PC-9 (cell line): ENCODE measurements at regions of chr10 and their contacts with region 1.

Region 1: DNA sequence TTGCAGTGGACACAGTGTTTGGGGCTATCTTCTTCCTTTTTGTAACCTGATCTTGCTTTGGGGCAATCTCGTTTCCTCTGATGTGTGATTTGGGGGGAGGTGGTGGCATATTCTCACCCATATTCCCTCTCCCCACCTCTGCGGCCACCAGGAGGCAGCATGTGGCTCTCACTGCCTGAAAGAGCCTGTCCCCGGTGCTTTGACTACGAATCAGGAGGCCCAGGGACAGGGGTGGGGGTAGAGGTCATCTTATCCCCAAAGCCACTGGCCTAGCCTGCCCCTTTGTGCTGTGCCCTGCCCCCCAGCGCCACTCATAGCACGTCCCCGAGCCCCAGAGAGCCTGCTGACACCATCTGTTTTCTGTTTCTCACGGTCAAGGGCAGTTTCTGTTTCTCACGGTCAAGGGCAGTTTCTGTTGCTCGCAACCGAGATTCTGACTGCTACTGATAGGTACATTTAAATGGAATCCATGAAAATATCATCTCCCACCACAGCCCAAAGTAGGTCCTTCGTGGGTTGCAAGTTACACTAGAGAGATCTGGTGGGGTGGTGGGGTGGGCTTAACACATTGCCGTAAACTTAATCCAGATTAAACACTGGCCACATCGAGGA is 28.2 kb downstream of the PHYH start:
- DNase-seq: peak in 1 of 2 experiments; percentile 8
- H3K4me3 ChIP-seq: no peak overlapping the region
- H3K27ac ChIP-seq: no peak overlapping the region
- H3K4me1 ChIP-seq: no peaks in the 10 kb centered on the region
- H3K27me3 ChIP-seq: no peaks in the 10 kb centered on the region
- CTCF ChIP-seq: peak; percentile 50

Region 2: DNA sequence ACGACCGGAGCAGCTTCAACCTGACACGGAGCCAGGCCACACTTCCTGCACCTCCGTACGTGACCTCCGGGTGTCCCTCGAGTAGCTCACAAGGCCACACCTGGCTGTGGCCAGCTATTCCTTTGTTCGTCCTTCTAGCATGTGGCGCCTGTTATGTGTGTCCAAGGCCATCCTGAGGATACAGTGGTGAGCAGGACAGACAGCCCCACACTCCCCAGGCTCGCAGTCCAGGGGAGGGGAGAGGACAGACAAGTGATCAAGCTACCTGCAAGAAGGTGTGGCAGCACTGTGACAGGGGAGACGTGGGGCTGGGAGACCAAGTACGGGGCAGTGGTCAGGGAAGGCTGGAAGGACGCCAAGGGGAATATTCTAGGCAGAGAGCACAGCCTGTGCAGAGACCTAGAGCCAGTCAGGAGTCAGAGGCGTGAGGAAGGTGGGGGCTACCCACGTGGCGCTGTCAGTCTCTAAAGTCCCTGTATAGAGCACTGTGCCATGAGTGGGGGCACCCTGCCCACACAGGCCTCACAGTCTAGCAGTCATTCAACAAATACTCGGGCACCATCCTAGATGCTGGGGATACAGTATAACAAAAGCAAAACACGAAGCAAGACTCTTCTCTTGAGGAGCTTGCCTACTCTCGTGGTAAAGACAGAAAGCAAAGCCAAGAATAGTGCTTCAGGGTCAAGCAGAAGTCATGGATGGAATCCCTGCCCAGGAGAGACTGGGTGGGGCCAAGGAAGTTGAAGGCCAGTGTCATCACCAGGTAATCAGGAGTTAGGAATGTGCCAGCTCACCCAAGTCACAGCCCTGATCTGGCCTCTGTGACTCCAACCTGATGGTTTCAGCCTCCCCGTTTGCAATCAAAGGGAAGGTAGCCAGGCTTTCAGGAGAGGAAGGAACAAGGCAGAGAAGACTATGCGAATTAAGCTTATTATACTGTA is 1389.9 kb before region 1 on chr10:
- CTCF ChIA-PET with region 1: no interaction called
- POLR2A ChIA-PET with region 1: no interaction called
- intact Hi-C with region 1: no loop called
- DNase-seq: peak; percentile 90 to 94
- H3K4me3 ChIP-seq: peak overlapping the region; percentile 36; the same call in 1 of the 2 replicates
- H3K27ac ChIP-seq: peak overlapping the region; percentile 100
- H3K4me1 ChIP-seq: peaks cover 79% of the 10 kb centered on the region
- H3K27me3 ChIP-seq: no peaks in the 10 kb centered on the region
- CTCF ChIP-seq: peak; percentile 44

Region 3: GRCh38 chr10:13099666-13100348 is 171.9 kb before region 1 on chr10 and contains the start of gene OPTN:
- CTCF ChIA-PET with region 1: no interaction called
- POLR2A ChIA-PET with region 1: no interaction called
- intact Hi-C with region 1: no loop called
- DNase-seq: peak; percentile 61 to 77
- H3K4me3 ChIP-seq: peak within 1 kb of the TSS; percentile 70
- H3K27ac ChIP-seq: peak within 1 kb of the TSS; percentile 38; the same call in 1 of the 2 replicates
- H3K4me1 ChIP-seq: 0 out of 2 replicates have a peak, but pooled peaks cover 3% of the 10 kb centered on the region
- H3K27me3 ChIP-seq: no peaks in the 10 kb centered on the region
- CTCF ChIP-seq: peak; percentile 71
- total RNA-seq, gene OPTN: 26.6 and 26.8 TPM in 2 replicates

Region 4: GRCh38 chr10:13247246-13247645 is 24.4 kb before region 1 on chr10:
- CTCF ChIA-PET with region 1: no interaction called
- POLR2A ChIA-PET with region 1: interaction called, 29 read pairs
- intact Hi-C with region 1: no loop called
- DNase-seq: no peak
- H3K4me3 ChIP-seq: no peak overlapping the region
- H3K27ac ChIP-seq: no peak overlapping the region
- H3K4me1 ChIP-seq: no peaks in the 10 kb centered on the region
- H3K27me3 ChIP-seq: no peaks in the 10 kb centered on the region
- CTCF ChIP-seq: no peak

Region 5: DNA sequence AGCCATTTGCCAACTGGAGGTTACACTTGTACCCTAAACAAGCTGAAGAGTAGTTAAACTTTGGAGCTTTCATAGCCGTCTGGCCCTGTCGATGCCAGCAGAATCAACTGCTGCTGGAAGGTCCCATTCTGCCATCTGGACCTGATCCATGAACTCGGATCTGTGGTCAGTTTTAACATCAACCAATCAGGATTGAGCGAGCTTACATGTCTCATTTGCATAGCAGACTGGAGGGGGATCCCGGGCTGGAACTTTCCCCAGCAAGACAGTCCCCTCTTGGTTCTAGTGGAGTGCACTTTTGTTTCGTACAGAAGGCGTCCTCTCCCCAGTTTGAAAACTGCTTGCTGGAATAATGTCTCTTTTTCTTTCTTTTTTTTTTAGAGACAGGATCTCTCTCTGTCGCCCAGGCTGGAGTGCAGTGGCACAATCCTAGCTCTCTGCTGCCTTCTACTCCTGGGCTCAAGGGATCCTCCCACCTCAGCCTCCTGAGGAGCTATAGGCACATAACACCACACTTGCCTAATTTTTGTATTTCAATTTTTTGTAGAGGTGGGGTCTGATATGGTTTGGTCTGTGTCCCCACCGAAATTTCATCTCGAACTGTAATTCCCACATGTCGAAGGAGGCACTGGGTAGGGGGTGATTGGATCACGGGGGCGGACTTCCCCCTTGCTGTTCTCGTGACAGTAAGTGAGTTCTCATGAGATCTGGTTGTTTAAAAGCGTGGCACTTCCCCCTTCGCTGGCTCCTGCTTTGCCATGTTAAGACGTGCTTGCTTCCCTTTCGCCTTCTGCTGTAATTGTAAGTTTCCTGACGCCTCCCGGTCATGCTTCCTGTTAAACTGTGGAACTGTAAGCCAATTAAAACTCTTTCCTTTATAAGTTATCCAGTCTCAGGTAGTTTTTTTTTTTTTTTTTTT is 119.2 kb after region 1 on chr10:
- CTCF ChIA-PET with region 1: no interaction called
- POLR2A ChIA-PET with region 1: no interaction called
- intact Hi-C with region 1: no loop called
- DNase-seq: no peak
- H3K4me3 ChIP-seq: no peak overlapping the region
- H3K27ac ChIP-seq: no peak overlapping the region
- H3K4me1 ChIP-seq: no peaks in the 10 kb centered on the region
- H3K27me3 ChIP-seq: peaks cover 40% of the 10 kb centered on the region
- CTCF ChIP-seq: no peak

Region 6: GRCh38 chr10:13485623-13486022 is 214.0 kb after region 1 on chr10:
- CTCF ChIA-PET with region 1: no interaction called
- POLR2A ChIA-PET with region 1: no interaction called
- intact Hi-C with region 1: no loop called
- DNase-seq: no peak
- H3K4me3 ChIP-seq: no peak overlapping the region
- H3K27ac ChIP-seq: no peak overlapping the region
- H3K4me1 ChIP-seq: no peaks in the 10 kb centered on the region
- H3K27me3 ChIP-seq: peaks cover 47% of the 10 kb centered on the region
- CTCF ChIP-seq: peak; percentile 53; the same call in 1 of the 2 replicates